Mucosa of descending colon (tissue), 3 donors: ENCODE measurements at regions of chr21 and their contacts with region 1.

Region 1: GRCh38 chr21:17925000-17925610 is 105.9 kb upstream of the C21orf91 start:
- DNase-seq: peak in 1 of 3 donors; percentile 74
- ATAC-seq: peak; percentile 88
- H3K4me3 ChIP-seq: no peak overlapping the region
- H3K4me1 ChIP-seq: no peaks in the 10 kb centered on the region
- CTCF ChIP-seq: peak; percentile 83

Region 2: GRCh38 chr21:17679002-17679600 is 246.0 kb before region 1 on chr21:
- intact Hi-C with region 1: loop called in 1 of 2 experiments (anchors 2 kb)
- DNase-seq: peak in 1 of 3 donors; percentile 40
- ATAC-seq: peak; percentile 85
- H3K4me3 ChIP-seq: no peak overlapping the region
- H3K4me1 ChIP-seq: no peaks in the 10 kb centered on the region
- CTCF ChIP-seq: peak; percentile 62